ENCODE measurements at regions of chr11 and their contacts with region 1.

Region 1: DNA sequence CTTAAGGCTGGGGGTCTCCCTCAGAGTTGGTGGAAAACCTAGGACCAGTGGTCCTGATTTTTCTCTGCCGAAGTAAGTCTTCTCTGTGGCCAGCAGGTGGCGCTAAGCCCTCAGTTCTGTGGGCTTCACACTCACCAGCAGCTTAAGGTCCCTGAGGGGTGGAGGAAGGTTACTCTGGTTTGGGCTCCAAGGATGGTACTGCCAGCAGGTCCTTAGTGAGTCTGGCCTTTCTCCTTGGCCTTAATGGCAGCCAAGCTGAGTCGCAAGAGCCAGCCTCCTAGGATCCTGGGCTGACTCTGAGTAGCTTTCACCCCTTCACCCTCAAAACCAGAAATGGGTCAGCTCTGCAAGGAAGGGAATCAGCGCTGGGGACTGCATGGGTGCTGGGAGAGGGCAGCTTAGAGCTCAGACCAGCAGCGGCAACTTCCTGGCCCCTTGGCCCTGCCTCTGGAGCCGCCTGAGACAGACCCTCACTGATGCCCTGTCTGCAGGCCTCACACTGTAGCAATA is 4.4 kb downstream of the KCNJ11 start:
- DNase-seq: peak; percentile 86 to 92
- ATAC-seq: peak; percentile 42 to 57 (median 48)
- H3K4me3 ChIP-seq: peak overlapping the region; percentile 78
- H3K27ac ChIP-seq: peak overlapping the region; percentile 96
- H3K4me1 ChIP-seq: peaks cover 56% of the 10 kb centered on the region
- H3K27me3 ChIP-seq: no peaks in the 10 kb centered on the region
- CTCF ChIP-seq: peak; percentile 96

Region 2: DNA sequence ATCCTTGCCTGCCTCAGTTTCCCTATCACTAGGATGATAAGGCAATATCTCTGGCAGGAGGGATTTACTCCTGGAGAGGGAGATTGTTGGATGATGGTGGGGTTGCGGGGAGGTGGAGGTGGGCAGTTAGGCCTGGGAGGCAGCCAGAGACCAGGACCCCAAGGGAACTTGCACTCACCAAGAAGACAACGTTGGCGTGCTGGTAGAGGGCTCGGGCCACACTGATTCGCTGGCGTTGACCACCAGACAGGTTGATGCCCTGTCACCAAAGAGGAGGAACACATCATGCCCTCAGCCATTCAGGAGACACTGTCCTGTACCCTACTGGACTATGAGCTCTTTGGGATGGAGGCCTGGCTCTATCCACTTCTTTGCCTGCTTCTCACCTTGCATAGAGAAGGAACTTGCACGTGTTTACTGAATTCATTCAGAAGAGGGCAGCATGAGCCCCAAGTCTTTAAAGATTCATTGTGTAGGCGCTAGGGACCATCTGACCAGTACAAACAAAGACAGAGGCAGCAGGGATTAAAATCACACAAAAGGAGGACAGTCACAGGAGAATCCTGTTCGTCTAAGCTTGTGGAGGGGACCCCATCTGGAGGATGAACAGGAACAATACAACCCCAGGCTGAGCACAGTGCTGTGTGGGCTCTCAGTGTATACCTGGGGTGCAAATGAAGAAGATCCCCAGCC is 28.6 kb after region 1 on chr11:
- intact Hi-C with region 1: loop called in 1 of 2 experiments (anchors 1 kb)
- DNase-seq: no peak
- ATAC-seq: no peak
- H3K4me3 ChIP-seq: no peak overlapping the region
- H3K27ac ChIP-seq: no peak overlapping the region
- H3K4me1 ChIP-seq: peaks cover 24% of the 10 kb centered on the region
- H3K27me3 ChIP-seq: no peaks in the 10 kb centered on the region
- CTCF ChIP-seq: no peak

Region 3: DNA sequence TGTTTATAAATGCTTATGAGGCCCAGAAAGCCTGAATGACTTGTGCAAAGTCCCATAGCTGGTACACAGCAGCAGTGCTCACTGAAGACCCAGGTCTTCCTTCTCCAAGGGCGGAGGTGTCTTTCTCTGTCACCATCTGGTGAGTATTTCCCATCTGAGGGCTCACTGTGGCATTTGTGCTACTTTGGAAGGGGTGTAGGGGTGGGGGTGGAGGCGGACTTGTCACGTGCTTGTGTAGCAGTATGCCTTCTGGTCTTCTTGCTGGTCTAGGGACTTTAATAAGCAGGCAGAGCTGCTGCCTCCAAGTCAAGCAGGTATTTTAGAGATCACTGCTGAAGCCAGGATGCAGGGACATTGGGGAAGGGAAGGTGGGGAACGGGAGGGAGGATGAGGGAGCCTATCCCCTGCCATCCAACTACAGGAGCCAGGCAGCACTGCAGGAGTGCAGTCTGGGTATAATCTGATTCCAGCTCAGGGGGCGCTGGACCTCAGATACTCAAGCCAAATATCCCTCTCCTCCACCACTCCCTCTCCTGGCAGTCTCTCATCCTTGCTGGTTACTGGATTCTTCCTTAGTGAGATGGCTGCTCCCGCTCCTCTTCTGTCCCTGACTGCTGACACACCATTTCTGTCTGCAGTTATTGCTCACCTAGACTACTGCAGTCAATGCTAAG is 89.2 kb after region 1 on chr11:
- intact Hi-C with region 1: loop called (anchors 1 to 5 kb)
- DNase-seq: no peak
- ATAC-seq: no peak
- H3K4me3 ChIP-seq: no peak overlapping the region
- H3K27ac ChIP-seq: no peak overlapping the region
- H3K4me1 ChIP-seq: no peaks in the 10 kb centered on the region
- H3K27me3 ChIP-seq: peaks cover 0 to 30% (median 7%) of the 10 kb centered on the region in 3 donors
- CTCF ChIP-seq: no peak

Region 4: DNA sequence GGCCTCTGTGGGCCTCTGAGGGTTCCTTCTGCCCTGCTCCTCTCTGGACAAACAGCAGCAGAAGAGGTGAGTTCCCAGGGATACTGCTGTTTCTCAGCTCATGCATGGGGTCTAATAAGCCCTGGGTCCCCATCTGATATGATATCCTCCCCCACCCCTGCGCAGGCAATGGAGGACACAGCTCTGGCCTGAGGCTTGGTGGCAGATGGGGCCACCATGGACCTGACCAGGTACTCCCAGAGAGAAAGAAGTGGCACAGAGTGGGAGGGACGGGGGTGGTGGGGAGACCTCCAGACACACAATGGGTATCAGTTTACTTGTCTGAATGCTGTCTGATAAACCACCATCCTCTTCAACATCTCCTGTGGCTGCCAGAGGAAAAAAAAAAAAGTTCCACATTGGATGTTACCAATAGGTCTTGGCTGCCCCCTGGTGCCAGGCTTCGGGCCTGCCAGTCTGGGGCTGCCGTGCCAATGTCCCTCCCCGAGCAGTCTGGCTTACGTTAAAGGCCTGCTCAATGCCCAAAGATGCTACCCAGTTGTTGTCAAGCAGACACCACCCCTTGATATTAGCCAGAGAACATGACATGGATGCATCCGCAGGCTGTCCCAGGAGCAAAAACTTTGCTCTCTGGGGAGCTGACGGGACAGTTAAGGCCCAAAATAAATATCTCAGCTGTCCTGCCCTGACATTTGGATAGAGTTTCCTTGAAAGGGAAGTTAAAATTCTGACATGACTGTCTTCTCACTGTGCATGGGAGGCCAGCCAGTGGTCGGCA is 120.5 kb after region 1 on chr11:
- intact Hi-C with region 1: loop called (anchors 1 kb)
- DNase-seq: peak; percentile 82 to 94
- ATAC-seq: peak; percentile 88 to 97 (median 90)
- H3K4me3 ChIP-seq: no peak overlapping the region
- H3K27ac ChIP-seq: peak overlapping the region; percentile 18
- H3K4me1 ChIP-seq: no peaks in the 10 kb centered on the region
- H3K27me3 ChIP-seq: no peaks in the 10 kb centered on the region
- CTCF ChIP-seq: peak; percentile 96

Measured in psoas muscle (tissue), 8 donors.